Naive thymus-derived CD4-positive, alpha-beta T cell (primary cell): ENCODE measurements at regions of chr10 and their contacts with region 1.

Region 1: GRCh38 chr10:110137142-110137545 is 70.3 kb upstream of the MXI1 start:
- DNase-seq: peak in 7 of 9 donors; percentile 48 to 67 (median 64)
- ATAC-seq: peak; percentile 85
- H3K4me3 ChIP-seq: no peak overlapping the region
- H3K4me3 Mint-ChIP-seq: peak overlapping the region in 1 of 10 donors; percentile 19
- H3K27ac ChIP-seq: peak overlapping the region; percentile 4
- H3K27ac Mint-ChIP-seq: peak overlapping the region; percentile 2 to 83 (median 45)
- H3K4me1 ChIP-seq: peaks cover 14% of the 10 kb centered on the region in 2 donors
- H3K4me1 Mint-ChIP-seq: peaks cover 13 to 38% (median 29%) of the 10 kb centered on the region in 7 donors
- H3K27me3 ChIP-seq: no peaks in the 10 kb centered on the region
- H3K27me3 Mint-ChIP-seq: no peaks in the 10 kb centered on the region

Region 2: GRCh38 chr10:110156046-110156445 is 18.9 kb after region 1 on chr10:
- CTCF ChIA-PET with region 1: interaction called, 4 read pairs
- POLR2A ChIA-PET with region 1: interaction called, 9 read pairs
- intact Hi-C with region 1: loop called (anchors 1 kb)
- DNase-seq: no peak
- ATAC-seq: no peak
- H3K4me3 ChIP-seq: no peak overlapping the region
- H3K4me3 Mint-ChIP-seq: peak overlapping the region in 7 of 10 donors; percentile 4 to 74 (median 43)
- H3K27ac ChIP-seq: no peak overlapping the region
- H3K27ac Mint-ChIP-seq: peak overlapping the region in 5 of 9 donors; percentile 6 to 78 (median 67)
- H3K4me1 ChIP-seq: peaks cover 18 to 26% of the 10 kb centered on the region in 2 donors
- H3K4me1 Mint-ChIP-seq: peaks cover 15 to 48% (median 23%) of the 10 kb centered on the region in 7 donors
- H3K27me3 ChIP-seq: peaks cover 10 to 25% of the 10 kb centered on the region in 2 donors
- H3K27me3 Mint-ChIP-seq: peaks cover 34 to 86% (median 58%) of the 10 kb centered on the region in 5 donors

Region 3: GRCh38 chr10:110162741-110163145 is 25.6 kb after region 1 on chr10:
- CTCF ChIA-PET with region 1: interaction called, 3 read pairs
- POLR2A ChIA-PET with region 1: interaction called, 3 read pairs
- intact Hi-C with region 1: loop called in 1 of 2 experiments (anchors 1 kb)
- DNase-seq: no peak
- ATAC-seq: no peak
- H3K4me3 ChIP-seq: no peak overlapping the region
- H3K4me3 Mint-ChIP-seq: no peak overlapping the region
- H3K27ac ChIP-seq: no peak overlapping the region
- H3K27ac Mint-ChIP-seq: no peak overlapping the region
- H3K4me1 ChIP-seq: peaks cover 0 to 7% of the 10 kb centered on the region in 2 donors
- H3K4me1 Mint-ChIP-seq: peaks cover 0 to 11% (median 3%) of the 10 kb centered on the region in 7 donors
- H3K27me3 ChIP-seq: peaks cover 0 to 24% of the 10 kb centered on the region in 2 donors
- H3K27me3 Mint-ChIP-seq: peaks cover 38 to 93% (median 51%) of the 10 kb centered on the region in 5 donors

Region 4: DNA sequence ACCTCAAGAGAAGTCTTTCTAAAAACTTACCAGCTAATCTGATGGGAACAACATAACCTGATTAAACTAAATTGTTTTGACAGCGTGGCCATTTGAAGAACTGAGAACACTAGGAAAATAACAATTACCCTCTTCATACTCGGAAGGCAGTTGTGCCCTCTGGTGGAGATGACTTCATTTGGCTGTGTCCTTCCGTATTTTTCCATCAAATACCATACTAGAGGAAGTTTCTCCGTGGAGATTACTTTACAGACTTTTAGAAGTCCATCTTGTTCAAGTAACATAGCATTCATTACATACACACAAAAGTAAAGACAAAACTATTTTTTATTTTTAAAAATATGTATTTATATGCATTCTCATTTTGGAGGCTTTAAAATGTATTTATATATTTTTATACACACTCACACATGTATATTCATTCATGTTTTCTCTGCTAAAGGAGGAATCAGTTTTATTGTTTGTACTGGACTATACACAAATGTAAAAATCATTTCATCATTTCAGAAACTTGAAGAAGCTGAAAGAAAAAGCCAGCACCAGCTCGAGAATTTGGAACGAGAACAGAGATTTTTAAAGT is 142.4 kb after region 1 on chr10:
- CTCF ChIA-PET with region 1: interaction called, 39 read pairs
- POLR2A ChIA-PET with region 1: interaction called, 5 read pairs
- intact Hi-C with region 1: loop called (anchors 1 kb)
- DNase-seq: peak in 7 of 9 donors; percentile 37 to 61 (median 56)
- ATAC-seq: peak; percentile 82
- H3K4me3 ChIP-seq: no peak overlapping the region
- H3K4me3 Mint-ChIP-seq: peak overlapping the region in 5 of 10 donors; percentile 4 to 52 (median 48)
- H3K27ac ChIP-seq: no peak overlapping the region
- H3K27ac Mint-ChIP-seq: peak overlapping the region in 3 of 9 donors; percentile 8 to 59 (median 48)
- H3K4me1 ChIP-seq: peaks cover 0 to 6% of the 10 kb centered on the region in 2 donors
- H3K4me1 Mint-ChIP-seq: peaks cover 14 to 42% (median 21%) of the 10 kb centered on the region in 7 donors
- H3K27me3 ChIP-seq: no peaks in the 10 kb centered on the region
- H3K27me3 Mint-ChIP-seq: peaks cover 0 to 22% (median 0%) of the 10 kb centered on the region in 5 donors

Region 5: GRCh38 chr10:110547139-110547761 is 410.1 kb after region 1 on chr10:
- CTCF ChIA-PET with region 1: interaction called, 4 read pairs
- POLR2A ChIA-PET with region 1: no interaction called
- intact Hi-C with region 1: loop called (anchors 1 to 2 kb)
- DNase-seq: peak in 7 of 9 donors; percentile 40 to 75 (median 68)
- ATAC-seq: peak; percentile 85
- H3K4me3 ChIP-seq: no peak overlapping the region
- H3K4me3 Mint-ChIP-seq: peak overlapping the region in 1 of 10 donors; percentile 2
- H3K27ac ChIP-seq: no peak overlapping the region
- H3K27ac Mint-ChIP-seq: peak overlapping the region in 2 of 9 donors; percentile 3 to 6
- H3K4me1 ChIP-seq: peaks cover 0 to 5% of the 10 kb centered on the region in 2 donors
- H3K4me1 Mint-ChIP-seq: peaks cover 3 to 16% (median 5%) of the 10 kb centered on the region in 7 donors
- H3K27me3 ChIP-seq: no peaks in the 10 kb centered on the region
- H3K27me3 Mint-ChIP-seq: peaks cover 0 to 39% (median 11%) of the 10 kb centered on the region in 5 donors